ENCODE measurements at regions of chr4 and their contacts with region 1.

Region 1: GRCh38 chr4:75490155-75490554 is 24.0 kb downstream of the RCHY1 start:
- DNase-seq: no peak
- H3K4me3 Mint-ChIP-seq: no peak overlapping the region
- H3K27ac Mint-ChIP-seq: no peak overlapping the region
- H3K4me1 Mint-ChIP-seq: no peaks in the 10 kb centered on the region
- H3K27me3 Mint-ChIP-seq: no peaks in the 10 kb centered on the region

Region 2: DNA sequence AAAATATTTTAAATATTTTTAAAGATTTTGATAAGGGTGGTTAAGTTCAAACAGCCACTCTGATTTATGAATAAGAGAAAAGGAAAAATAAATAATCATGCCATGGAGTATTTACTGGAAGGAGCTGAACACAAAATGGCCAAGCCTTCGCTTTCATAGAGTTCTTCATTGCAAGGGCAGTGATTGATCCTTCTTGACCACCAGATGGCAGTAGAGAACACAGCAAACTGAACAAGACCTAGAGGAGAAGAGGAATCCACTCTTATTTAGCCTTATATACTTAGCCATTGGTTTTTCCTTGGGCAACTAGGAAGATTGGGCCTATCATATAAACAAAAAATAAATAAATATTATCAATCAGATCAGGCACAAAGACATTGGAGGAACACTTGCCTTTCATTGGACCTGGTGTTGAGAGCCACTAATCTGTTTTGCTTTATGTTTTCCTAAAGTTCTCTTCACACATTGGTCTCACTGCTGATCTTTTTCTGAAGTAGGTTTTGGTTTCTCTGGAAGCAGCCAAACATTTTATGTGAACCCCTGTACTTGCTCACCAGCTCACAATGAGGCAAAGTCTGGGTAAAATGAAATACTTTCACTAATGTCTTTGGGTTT is 615.3 kb before region 1 on chr4:
- CTCF ChIA-PET with region 1: no interaction called
- intact Hi-C with region 1: loop called (anchors 10 kb)
- DNase-seq: peak; percentile 39
- H3K4me3 Mint-ChIP-seq: no peak overlapping the region
- H3K27ac Mint-ChIP-seq: no peak overlapping the region
- H3K4me1 Mint-ChIP-seq: no peaks in the 10 kb centered on the region
- H3K27me3 Mint-ChIP-seq: peaks cover 12% of the 10 kb centered on the region

Region 3: DNA sequence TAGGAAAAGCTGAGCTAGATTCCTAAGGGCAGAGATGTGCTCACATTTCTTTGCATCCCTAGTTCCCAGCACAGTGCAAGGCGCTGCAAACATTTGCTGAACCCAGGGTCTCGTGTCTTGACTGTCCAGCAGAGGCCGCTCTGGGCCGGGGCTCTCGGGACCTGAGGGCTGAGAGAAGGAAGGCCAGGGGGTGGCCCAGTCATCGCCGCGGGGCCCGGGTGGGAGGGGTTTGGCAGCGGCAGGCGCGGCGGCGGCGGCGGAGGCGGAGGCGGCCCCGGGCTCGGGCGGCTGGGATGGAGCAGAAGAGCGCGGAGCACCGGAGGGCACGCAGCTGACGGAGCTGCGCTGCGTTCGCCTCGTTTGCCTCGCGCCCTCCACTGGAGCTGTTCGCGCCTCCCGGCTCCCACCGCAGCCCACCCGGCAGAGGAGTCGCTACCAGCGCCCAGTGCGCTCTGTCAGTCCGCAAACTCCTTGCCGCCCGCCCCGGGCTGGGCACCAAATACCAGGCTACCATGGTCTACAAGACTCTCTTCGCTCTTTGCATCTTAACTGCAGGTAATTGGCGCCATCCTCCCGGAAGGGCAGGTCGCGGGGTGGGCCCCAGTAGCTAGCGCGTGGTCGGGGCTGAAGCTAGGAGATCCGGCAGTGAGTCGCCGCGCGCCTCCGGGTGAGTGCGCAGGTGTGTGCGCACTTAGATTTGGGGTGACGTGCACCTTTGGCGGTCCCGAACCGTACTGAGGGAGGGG is 557.2 kb before region 1 on chr4 and contains the start of gene PARM1:
- CTCF ChIA-PET with region 1: no interaction called
- intact Hi-C with region 1: loop called (anchors 5 kb)
- DNase-seq: peak; percentile 70
- H3K4me3 Mint-ChIP-seq: peak within 1 kb of the TSS; percentile 54
- H3K27ac Mint-ChIP-seq: no peak within 1 kb of the TSS
- H3K4me1 Mint-ChIP-seq: peaks cover 18% of the 10 kb centered on the region
- H3K27me3 Mint-ChIP-seq: peaks cover 54% of the 10 kb centered on the region
- total RNA-seq, gene PARM1: 0.05 TPM in 1 of 2 experiments, not detected in the other

Region 4: DNA sequence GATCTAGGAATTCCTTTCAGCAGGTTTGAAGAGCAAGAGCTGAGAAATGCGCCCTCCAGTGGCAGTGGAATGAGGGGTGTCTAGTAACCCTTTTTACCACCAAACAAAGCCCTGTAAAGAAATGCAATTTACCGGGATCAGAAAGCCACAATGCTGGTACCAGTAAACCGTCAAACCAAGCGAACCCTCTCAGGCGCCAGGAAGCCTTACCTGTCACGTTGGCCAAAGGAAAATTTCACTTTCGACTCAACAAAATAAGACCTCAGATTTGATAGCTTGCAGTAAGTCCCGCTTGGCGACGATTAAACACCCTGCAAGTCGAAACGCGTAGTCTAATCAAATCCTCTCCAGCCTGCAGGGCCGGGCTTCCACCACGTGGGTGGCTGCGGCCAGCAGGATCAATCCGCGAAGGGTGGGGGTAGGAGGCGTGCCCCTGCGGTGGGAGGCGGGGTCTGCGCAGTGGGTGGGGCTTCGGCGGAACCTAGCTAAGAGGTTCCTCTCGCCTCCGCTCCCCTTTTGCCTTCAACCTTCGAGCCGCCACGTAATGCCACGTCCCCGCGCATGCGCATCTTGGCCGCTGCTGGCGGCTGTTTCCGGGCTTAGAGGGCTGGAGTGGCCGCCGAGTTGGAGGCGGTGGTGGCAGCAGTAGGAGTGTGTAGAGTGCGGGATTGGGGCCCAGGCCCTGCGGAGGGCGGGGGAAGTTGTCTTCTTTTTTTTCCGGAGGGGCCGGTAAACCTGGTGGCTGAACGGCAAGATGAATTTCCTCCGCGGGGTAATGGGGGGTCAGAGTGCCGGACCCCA is 234.1 kb after region 1 on chr4 and contains the start of gene USO1:
- CTCF ChIA-PET with region 1: no interaction called
- intact Hi-C with region 1: no loop called
- DNase-seq: peak; percentile 99
- H3K4me3 Mint-ChIP-seq: peak within 1 kb of the TSS; percentile 99
- H3K27ac Mint-ChIP-seq: peak within 1 kb of the TSS; percentile 97
- H3K4me1 Mint-ChIP-seq: peaks cover 47% of the 10 kb centered on the region
- H3K27me3 Mint-ChIP-seq: no peaks in the 10 kb centered on the region
- total RNA-seq, gene USO1: 42.1 to 42.4 TPM

Measured in activated naive CD4-positive, alpha-beta T cell treated with anti-CD3 and anti-CD28 coated beads for 36 hours (primary cell).